Ovary (tissue), 10 donors: ENCODE measurements at regions of chr9 and their contacts with region 1.

Region 1: GRCh38 chr9:17433526-17433925 is 145.3 kb upstream of the SH3GL2 start:
- DNase-seq: no peak
- H3K4me3 ChIP-seq: no peak overlapping the region
- H3K27ac ChIP-seq: no peak overlapping the region
- H3K4me1 ChIP-seq: no peaks in the 10 kb centered on the region
- H3K27me3 ChIP-seq: no peaks in the 10 kb centered on the region
- CTCF ChIP-seq: no peak
- EP300 ChIP-seq: no peak
- POLR2A ChIP-seq: no peak

Region 2: GRCh38 chr9:18626046-18626698 is 1192.6 kb after region 1 on chr9:
- intact Hi-C with region 1: loop called in 1 of 4 experiments (anchors 5 kb)
- DNase-seq: no peak
- H3K4me3 ChIP-seq: no peak overlapping the region
- H3K27ac ChIP-seq: no peak overlapping the region
- H3K4me1 ChIP-seq: no peaks in the 10 kb centered on the region
- H3K27me3 ChIP-seq: no peaks in the 10 kb centered on the region
- CTCF ChIP-seq: no peak
- EP300 ChIP-seq: no peak
- POLR2A ChIP-seq: no peak